ENCODE measurements at regions of chr19 and their contacts with region 1.

Region 1: GRCh38 chr19:48835734-48836088 is 580 bp downstream of the HSD17B14 start:
- DNase-seq: peak; percentile 87
- H3K4me3 ChIP-seq: peak overlapping the region; percentile 63 to 71
- H3K27ac ChIP-seq: peak overlapping the region; percentile 83 to 89
- H3K4me1 ChIP-seq: peaks cover 0 to 12% of the 10 kb centered on the region in 2 experiments; a peak in 1 of 4 replicates
- H3K27me3 ChIP-seq: no peaks in the 10 kb centered on the region
- CTCF ChIP-seq: peak; percentile 94
- EP300 ChIP-seq: no peak
- RAD21 ChIP-seq: peak; percentile 92

Region 2: DNA sequence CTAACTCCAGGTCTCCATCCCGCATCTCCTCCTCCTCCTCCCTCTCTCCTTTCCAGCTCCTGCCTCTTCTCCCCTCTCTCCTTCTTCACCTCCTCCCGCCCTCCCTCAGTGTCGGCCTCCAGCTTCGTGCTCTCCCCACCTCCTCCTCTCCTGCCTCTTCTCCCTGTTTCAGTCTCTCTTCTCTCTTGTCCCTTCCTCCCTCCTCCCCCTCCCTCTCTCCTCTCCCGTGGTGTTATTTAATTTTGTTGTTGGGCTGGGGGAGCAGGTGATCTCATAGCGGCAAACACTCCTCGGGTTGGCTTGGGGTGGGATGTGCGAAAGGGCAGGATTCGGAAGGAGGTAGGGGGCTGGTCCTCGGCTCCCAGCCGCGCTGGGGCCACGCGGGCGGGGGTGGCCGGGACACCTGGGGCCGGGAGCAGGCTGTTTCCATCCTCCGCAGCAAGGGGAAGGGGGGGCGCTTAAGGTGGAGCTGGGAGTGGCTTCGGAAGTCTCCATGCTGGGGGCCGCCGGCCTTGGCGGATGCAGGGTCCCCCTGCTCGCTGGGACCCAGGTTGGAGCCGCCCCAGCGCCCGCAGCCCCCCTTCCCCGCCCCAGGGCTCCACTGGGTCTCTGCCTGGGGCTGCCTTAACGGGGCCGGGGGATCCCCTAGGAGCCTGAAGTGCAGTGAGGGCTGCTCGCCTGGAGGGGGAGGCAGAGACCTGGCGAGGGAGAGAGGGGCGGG is 189.6 kb before region 1 on chr19 and contains the start of gene CA11:
- CTCF ChIA-PET with region 1: interaction called, 10 read pairs
- POLR2A ChIA-PET with region 1: no interaction called
- DNase-seq: peak; percentile 96
- H3K4me3 ChIP-seq: peak within 1 kb of the TSS; percentile 43 to 74
- H3K27ac ChIP-seq: peak within 1 kb of the TSS; percentile 54 to 69
- H3K4me1 ChIP-seq: peaks cover 4 to 6% of the 10 kb centered on the region in 2 experiments; a peak in 2 of 4 replicates
- H3K27me3 ChIP-seq: no peaks in the 10 kb centered on the region
- CTCF ChIP-seq: peak; percentile 76
- EP300 ChIP-seq: no peak
- RAD21 ChIP-seq: peak; percentile 90
- polyA plus RNA-seq, gene CA11: 13.1 and 13.5 TPM in 2 replicates

Region 3: DNA sequence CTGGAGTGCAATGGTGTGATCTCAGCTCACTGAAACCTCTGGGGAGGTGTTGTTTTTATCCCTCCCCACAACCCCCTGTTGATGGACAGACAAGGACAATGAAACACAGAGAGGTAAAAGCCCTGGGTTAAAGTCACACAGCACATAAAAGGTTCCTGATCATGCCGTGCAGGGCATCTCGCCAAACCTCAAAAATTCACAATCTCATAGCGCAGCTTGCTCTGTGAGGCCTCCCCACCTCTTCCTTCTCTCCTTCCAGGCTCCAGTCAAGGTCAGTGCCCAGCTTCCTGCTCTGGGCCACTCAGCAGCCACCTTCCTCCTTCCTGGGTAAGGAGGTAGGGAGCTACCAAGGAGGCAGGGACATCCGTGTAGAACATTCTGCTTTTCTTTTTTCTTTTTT is 137.7 kb before region 1 on chr19:
- CTCF ChIA-PET with region 1: no interaction called
- POLR2A ChIA-PET with region 1: no interaction called
- DNase-seq: no peak
- H3K4me3 ChIP-seq: no peak overlapping the region
- H3K27ac ChIP-seq: no peak overlapping the region
- H3K4me1 ChIP-seq: peaks cover 0 to 5% of the 10 kb centered on the region in 2 experiments; a peak in 1 of 4 replicates
- H3K27me3 ChIP-seq: no peaks in the 10 kb centered on the region
- CTCF ChIP-seq: no peak
- EP300 ChIP-seq: no peak
- RAD21 ChIP-seq: no peak

Region 4: DNA sequence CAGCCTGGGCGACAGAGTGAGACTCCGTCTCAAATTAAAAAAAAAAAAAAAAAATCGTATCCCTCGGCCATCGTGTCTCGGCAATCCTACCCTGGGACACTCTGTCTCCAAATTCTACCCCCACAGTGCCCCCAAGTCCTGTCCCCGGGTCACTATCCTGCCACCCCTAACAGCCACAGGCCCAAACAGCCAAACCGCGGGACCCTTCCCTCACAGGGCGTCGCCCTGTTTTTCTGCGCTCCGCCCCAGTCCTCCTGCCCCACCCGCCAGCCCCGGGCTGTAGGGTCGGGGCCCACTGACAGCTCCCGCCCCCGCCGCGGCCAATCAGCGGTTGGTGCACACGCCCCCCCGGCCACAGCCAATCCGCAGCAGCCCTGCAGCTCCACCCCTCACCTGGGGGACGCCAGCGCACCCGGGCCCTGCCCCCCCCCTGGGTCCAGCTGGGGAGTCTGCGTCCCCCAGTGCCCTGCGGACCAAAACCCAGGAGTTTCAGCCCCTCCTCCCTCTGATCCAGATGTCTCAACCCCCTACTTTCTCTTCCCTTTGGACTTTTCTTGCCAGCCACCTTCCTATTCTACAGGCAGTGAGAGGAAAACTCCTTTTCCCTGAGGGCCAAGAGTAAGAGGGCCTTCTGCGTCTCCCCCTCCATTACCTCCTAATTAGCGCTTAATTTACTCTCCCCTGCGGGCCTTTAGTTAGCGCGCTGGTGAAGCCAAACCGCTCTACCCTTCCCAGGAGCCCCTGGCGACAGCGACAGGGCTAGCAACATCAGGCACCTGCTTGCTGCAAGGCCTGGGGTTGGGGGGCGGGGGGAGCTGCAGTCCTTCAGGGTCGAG is 23.4 kb before region 1 on chr19:
- CTCF ChIA-PET with region 1: interaction called, 10 read pairs
- POLR2A ChIA-PET with region 1: interaction called, 4 read pairs
- DNase-seq: peak; percentile 97
- H3K4me3 ChIP-seq: peak overlapping the region; percentile 48 to 59
- H3K27ac ChIP-seq: peak overlapping the region in 1 of 2 experiments; percentile 53; a peak in 2 of 4 replicates
- H3K4me1 ChIP-seq: peaks cover 0 to 12% of the 10 kb centered on the region in 2 experiments; a peak in 2 of 4 replicates
- H3K27me3 ChIP-seq: no peaks in the 10 kb centered on the region
- CTCF ChIP-seq: no peak
- EP300 ChIP-seq: no peak
- RAD21 ChIP-seq: no peak

Measured in SK-N-SH (cell line).